PC-9 (cell line): ENCODE measurements at regions of chr2 and their contacts with region 1.

Region 1: DNA sequence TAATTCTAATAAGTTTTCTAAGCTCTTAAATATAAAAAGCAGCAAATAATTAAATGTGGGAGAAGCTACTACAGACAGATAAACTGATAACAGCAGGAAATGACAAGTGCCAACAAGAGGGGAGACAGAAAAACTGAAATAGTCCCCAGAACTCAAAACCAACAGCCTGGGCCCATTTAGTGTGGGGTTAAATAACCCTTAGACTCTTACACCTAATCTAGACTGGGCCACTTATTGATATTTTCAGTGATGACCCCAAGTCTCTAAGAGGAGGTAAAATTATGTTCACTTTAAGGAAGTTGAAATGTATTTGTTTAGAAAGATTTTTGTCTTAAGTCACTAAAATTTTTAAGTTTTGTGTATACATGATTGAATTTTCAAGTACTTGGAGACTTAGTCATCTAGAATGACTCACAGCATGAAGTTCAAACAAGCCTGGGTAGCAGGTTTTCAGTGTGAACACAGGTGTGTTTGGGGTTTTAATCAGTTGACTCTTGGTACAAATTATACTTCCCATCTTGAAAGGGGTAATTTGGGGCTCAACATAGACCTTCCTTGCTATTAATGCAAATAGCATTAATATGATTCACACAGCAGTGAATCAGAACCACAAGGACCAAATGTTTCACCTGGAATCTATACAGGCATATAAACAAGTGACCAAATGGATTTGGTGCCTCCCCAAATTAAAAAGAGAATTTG is 54.9 kb upstream of the MYO3B start:
- DNase-seq: peak; percentile 21 to 98
- H3K4me3 ChIP-seq: peak overlapping the region; percentile 22; the same call in 1 of the 2 replicates
- H3K27ac ChIP-seq: peak overlapping the region; percentile 97
- H3K4me1 ChIP-seq: peaks cover 72% of the 10 kb centered on the region
- H3K27me3 ChIP-seq: no peaks in the 10 kb centered on the region
- CTCF ChIP-seq: no peak

Region 2: GRCh38 chr2:170101778-170102177 is 21.3 kb before region 1 on chr2:
- CTCF ChIA-PET with region 1: no interaction called
- POLR2A ChIA-PET with region 1: no interaction called
- intact Hi-C with region 1: no loop called
- DNase-seq: no peak
- H3K4me3 ChIP-seq: no peak overlapping the region
- H3K27ac ChIP-seq: no peak overlapping the region
- H3K4me1 ChIP-seq: no peaks in the 10 kb centered on the region
- H3K27me3 ChIP-seq: no peaks in the 10 kb centered on the region
- CTCF ChIP-seq: no peak

Region 3: GRCh38 chr2:170162271-170162632 is 39.2 kb after region 1 on chr2:
- CTCF ChIA-PET with region 1: no interaction called
- POLR2A ChIA-PET with region 1: interaction called, 16 read pairs
- intact Hi-C with region 1: no loop called
- DNase-seq: peak; percentile 9 to 91
- H3K4me3 ChIP-seq: no peak overlapping the region
- H3K27ac ChIP-seq: peak overlapping the region; percentile 19; the same call in 1 of the 2 replicates
- H3K4me1 ChIP-seq: peaks cover 16% of the 10 kb centered on the region
- H3K27me3 ChIP-seq: no peaks in the 10 kb centered on the region
- CTCF ChIP-seq: no peak

Region 4: GRCh38 chr2:170180031-170180566 is 57.1 kb after region 1 on chr2:
- CTCF ChIA-PET with region 1: no interaction called
- POLR2A ChIA-PET with region 1: no interaction called
- intact Hi-C with region 1: loop called (anchors 5 kb)
- DNase-seq: peak; percentile 15 to 60
- H3K4me3 ChIP-seq: peak overlapping the region; percentile 37
- H3K27ac ChIP-seq: no peak overlapping the region
- H3K4me1 ChIP-seq: peaks cover 28% of the 10 kb centered on the region
- H3K27me3 ChIP-seq: no peaks in the 10 kb centered on the region
- CTCF ChIP-seq: no peak

Region 5: DNA sequence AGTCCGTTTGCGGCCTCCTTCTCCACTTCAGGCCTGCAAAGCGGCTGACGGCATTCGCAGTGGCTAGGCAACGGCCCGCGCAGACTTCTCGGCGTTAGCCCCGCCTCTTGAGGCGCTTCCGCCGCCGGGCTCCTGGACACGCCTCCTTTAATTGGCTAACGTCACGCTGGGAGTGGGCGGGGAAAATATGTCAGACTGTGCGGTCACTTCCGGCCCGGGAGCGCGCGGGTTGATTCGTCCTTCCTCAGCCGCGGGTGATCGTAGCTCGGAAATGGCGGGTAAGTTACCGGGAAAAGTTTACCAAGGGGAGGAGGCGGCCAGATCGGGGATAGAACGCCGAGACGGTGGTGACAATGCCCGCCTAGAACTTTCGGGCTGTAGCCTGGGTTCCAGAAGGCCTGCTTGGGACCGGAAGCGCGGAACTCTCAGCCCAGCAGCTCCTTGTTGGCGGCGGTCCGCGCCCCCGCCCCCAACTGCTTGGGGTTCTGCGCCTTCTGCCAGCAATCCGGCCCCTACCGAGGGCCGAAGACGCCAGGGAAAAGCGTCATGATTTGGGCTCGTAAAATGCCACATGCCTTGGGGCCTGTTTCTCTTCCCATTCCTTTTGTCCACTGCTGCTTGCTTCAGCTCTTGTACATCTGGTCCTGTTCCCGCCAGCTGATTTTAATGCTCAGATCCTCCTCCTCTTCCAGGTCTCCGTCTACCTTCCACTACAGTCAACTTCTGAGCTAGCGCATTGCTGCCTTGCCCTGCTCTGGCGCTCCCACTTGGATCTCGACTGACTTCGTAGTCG is 1799.4 kb after region 1 on chr2 and contains the start of gene HAT1:
- CTCF ChIA-PET with region 1: no interaction called
- POLR2A ChIA-PET with region 1: no interaction called
- intact Hi-C with region 1: no loop called
- DNase-seq: peak; percentile 98 to 100
- H3K4me3 ChIP-seq: peak within 1 kb of the TSS; percentile 68
- H3K27ac ChIP-seq: peak within 1 kb of the TSS; percentile 52
- H3K4me1 ChIP-seq: peaks cover 25% of the 10 kb centered on the region
- H3K27me3 ChIP-seq: no peaks in the 10 kb centered on the region
- CTCF ChIP-seq: no peak
- total RNA-seq, gene HAT1: 96.4 and 132 TPM in 2 replicates